Motor neuron (in vitro differentiated cells): ENCODE measurements at regions of chr10 and their contacts with region 1.

Region 1: GRCh38 chr10:99042051-99042771 is 193.4 kb downstream of the HPSE2 start:
- ATAC-seq: peak in 2 of 8 experiments; percentile 73 to 88
- H3K4me3 ChIP-seq: no peak overlapping the region
- H3K27ac ChIP-seq: no peak overlapping the region
- H3K4me1 ChIP-seq: no peaks in the 10 kb centered on the region

Region 2: DNA sequence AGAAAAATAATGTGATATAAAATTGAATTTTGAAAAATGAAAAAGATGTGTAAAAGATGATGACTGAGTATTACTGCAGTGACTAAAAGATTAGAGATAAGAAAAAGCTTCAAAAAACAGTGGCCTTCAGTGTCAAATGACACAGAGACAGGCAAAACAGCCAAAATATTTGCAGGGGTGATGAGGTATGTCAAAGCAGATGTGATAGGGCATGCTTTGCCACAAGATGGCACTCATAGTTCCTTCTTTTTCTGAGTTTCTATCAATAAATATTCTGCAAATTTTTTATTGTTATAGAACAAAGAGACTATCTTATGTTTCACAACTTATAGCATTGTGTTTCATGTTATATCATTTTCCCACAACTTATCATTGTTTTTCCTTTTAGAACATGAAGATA is 251.4 kb before region 1 on chr10:
- in situ Hi-C with region 1: loop called in 1 of 9 experiments (anchors 25 kb)
- ATAC-seq: peak in 2 of 8 experiments; percentile 31 to 45
- H3K4me3 ChIP-seq: no peak overlapping the region
- H3K27ac ChIP-seq: no peak overlapping the region
- H3K4me1 ChIP-seq: no peaks in the 10 kb centered on the region

Region 3: DNA sequence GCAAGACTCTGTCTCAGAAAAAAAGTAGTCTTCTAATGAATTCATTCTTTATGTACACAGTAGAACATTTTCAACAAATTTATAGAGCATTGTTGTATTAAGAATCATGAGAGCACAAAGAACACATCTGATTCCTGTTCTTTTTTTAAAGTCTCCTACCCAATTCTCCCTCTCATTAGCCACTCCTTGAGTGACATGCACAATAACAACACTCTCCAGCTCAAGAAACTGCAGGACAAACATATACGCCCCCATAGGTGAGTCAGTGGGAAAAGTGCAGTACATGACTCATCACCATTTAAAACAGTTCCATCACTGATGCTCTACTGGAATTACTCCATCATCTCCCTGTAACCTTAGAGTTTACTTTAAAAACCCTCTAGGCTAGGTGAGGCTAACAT is 98.8 kb after region 1 on chr10:
- in situ Hi-C with region 1: loop called in 1 of 9 experiments (anchors 25 kb)
- ATAC-seq: peak in 3 of 8 experiments; percentile 55 to 86 (median 57)
- H3K4me3 ChIP-seq: no peak overlapping the region
- H3K27ac ChIP-seq: no peak overlapping the region
- H3K4me1 ChIP-seq: no peaks in the 10 kb centered on the region